AG04449 (cell line): ENCODE measurements at regions of chr5 and their contacts with region 1.

Region 1: GRCh38 chr5:39547553-39548154 is 122.9 kb upstream of the DAB2 start:
- DNase-seq: no peak
- H3K4me3 ChIP-seq: no peak overlapping the region
- CTCF ChIP-seq: peak; percentile 44

Region 2: GRCh38 chr5:39376293-39376714 is 171.3 kb before region 1 on chr5:
- CTCF ChIA-PET with region 1: interaction called, 70 read pairs
- POLR2A ChIA-PET with region 1: no interaction called
- DNase-seq: no peak
- H3K4me3 ChIP-seq: no peak overlapping the region
- CTCF ChIP-seq: peak; percentile 41

Region 3: GRCh38 chr5:39405083-39405843 is 142.4 kb before region 1 on chr5:
- CTCF ChIA-PET with region 1: interaction called, 76 read pairs
- POLR2A ChIA-PET with region 1: interaction called, 4 read pairs
- DNase-seq: no peak
- H3K4me3 ChIP-seq: no peak overlapping the region
- CTCF ChIP-seq: no peak

Region 4: DNA sequence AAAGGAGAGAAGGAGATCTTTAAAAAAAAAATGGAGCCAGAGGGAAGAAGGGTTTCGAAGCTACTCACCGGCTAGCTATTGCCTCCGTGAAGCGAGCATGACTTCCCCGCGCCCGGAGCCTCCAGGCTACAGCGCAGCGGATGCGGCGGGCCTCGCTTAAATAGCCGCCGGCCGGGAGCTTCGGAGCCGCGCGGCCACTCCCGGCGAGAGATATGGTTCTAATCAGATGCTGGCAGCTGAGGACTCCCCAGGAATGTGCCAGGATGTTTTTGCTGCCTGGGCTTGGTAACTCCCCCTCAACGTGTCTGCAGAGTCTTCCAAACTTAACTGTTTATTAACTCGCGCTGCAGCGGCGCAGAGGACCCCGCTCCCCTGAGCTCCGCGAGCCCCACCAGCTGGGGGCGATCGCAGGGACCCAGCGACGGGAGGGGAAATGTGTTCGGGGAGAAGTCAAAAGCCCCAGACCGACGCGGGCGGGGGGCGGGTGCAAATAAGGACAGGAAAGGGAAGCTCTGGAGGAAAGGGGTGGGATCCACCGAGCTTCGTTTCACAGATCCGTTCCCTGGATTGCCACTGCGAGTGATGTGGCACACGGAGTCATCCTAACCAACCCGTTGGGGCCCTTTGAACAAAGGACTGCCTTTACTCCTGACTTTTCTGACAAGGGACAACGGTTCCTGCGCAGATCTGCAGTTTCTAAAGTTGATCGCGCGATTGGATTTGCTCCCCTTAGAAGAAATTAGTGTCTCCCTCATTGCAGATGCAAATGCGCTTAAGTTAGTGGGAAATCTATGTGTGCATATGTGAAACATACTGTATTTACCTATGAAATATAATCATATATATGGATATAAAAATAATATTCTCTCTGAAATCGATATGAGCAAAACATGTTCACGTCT is 122.7 kb before region 1 on chr5 and contains the start of gene DAB2:
- CTCF ChIA-PET with region 1: interaction called, 111 read pairs
- POLR2A ChIA-PET with region 1: interaction called, 39 read pairs
- DNase-seq: peak; percentile 91
- H3K4me3 ChIP-seq: peak within 1 kb of the TSS; percentile 83
- CTCF ChIP-seq: peak; percentile 87

Region 5: GRCh38 chr5:39526914-39527477 is 20.7 kb before region 1 on chr5:
- CTCF ChIA-PET with region 1: interaction called, 20 read pairs
- POLR2A ChIA-PET with region 1: interaction called, 3 read pairs
- DNase-seq: no peak
- H3K4me3 ChIP-seq: no peak overlapping the region
- CTCF ChIP-seq: no peak